Esophagus muscularis mucosa (tissue), 4 donors: ENCODE measurements at regions of chr5 and their contacts with region 1.

Region 1: GRCh38 chr5:179907570-179908324 is at the start of gene TBC1D9B:
- DNase-seq: no peak
- H3K4me3 ChIP-seq: peak within 1 kb of the TSS; percentile 69 to 88 (median 72)
- H3K27ac ChIP-seq: peak within 1 kb of the TSS; percentile 75 to 84 (median 80)
- H3K4me1 ChIP-seq: peaks cover 18 to 27% (median 22%) of the 10 kb centered on the region in 4 donors
- H3K27me3 ChIP-seq: no peaks in the 10 kb centered on the region
- CTCF ChIP-seq: peak; percentile 43 to 61 (median 58)
- EP300 ChIP-seq: no peak
- POLR2A ChIP-seq: no peak
- total RNA-seq, gene TBC1D9B: 80.2 to 229 (median 143) TPM

Region 2: DNA sequence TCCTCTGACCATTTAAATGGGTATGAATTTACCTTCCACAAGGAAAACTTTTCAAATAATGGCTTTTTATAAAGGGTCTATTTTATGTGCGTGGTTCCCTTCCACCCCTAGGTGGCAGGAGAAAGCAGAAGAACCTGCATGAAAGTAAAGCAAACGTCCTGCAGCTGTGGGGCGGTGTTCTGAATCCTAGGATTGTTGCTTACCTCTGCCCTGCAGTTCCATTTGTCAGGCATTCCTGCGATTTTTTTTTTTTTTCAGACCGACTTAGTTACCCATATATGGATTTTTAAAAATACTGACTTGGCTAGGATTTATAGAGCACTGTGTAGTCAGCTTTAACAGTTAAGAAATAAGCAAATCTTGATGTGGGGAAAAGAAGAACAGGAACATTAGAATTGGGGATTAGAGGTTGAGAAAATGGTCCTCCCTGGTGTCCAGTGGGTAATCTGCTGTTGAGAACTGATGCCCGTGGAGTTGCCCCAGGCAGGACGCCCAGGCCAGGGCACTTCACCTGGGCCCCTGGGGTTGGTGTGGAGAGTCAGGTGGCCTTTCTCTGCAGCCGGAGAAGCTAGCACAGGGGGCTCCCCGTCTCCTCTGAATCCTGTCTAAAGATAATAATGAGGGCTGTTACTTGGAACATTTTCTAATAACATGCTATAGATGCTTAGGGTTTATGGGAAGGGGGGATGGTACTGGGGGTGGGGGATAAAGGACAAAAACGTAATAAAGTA is 144.4 kb before region 1 on chr5:
- intact Hi-C with region 1: loop called (anchors 10 kb)
- DNase-seq: no peak
- H3K4me3 ChIP-seq: no peak overlapping the region
- H3K27ac ChIP-seq: peak overlapping the region; percentile 51 to 77 (median 64)
- H3K4me1 ChIP-seq: peaks cover 72 to 93% (median 83%) of the 10 kb centered on the region in 4 donors
- H3K27me3 ChIP-seq: no peaks in the 10 kb centered on the region
- CTCF ChIP-seq: peak; percentile 84 to 91 (median 89)
- EP300 ChIP-seq: no peak
- POLR2A ChIP-seq: no peak

Region 3: GRCh38 chr5:179806250-179807222 is 101.2 kb before region 1 on chr5 and contains the start of gene MGAT4B:
- intact Hi-C with region 1: loop called (anchors 2 kb)
- DNase-seq: no peak
- H3K4me3 ChIP-seq: peak within 1 kb of the TSS; percentile 76 to 99 (median 94)
- H3K27ac ChIP-seq: peak within 1 kb of the TSS; percentile 92 to 99 (median 98)
- H3K4me1 ChIP-seq: peaks cover 44 to 53% (median 52%) of the 10 kb centered on the region in 4 donors
- H3K27me3 ChIP-seq: no peaks in the 10 kb centered on the region
- CTCF ChIP-seq: no peak
- EP300 ChIP-seq: no peak
- POLR2A ChIP-seq: no peak
- total RNA-seq, gene MGAT4B: 47.1 to 70.6 (median 59.2) TPM

Region 4: DNA sequence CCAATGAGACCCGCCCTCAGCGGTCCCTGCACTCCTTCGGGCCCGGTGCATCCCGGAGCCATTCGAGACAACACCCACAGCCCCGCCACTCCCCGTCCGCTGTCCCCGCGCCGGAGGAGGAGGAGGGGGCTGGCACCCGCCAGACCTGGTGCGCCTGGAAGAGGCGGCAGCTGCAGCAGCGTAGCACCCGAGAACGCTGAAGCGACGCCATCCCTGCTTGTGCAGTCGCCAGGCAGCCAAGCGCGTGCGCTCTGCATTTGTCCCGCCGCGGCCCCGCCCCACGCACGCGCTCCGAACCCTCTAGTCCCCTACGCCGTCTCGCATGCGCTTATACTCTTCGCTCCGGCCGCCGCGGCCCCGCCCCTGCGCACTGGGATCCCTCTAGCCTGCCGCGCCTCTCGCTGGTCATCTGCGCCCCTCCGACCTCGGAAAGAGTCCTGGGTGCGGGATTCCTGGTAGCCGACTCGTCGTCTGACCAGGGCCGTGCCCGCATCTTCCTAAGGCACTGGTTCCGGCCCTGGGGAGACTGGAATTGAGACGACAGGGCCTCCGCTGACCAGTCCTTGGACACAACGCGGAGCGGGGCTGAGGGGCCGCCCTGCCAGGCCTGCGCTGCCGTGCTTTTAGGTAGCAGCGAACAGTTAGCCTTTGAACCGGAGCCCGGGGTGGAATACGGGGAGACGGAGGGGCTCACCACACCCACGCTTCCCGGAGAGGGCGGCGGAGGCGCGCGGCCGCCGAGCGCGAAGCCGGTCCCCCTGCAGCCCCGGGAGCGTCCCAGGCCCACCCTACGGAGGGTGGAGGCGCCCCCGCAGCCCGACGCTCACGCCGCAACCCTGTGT is 48.9 kb before region 1 on chr5 and contains the start of gene MRNIP:
- intact Hi-C with region 1: loop called (anchors 5 kb)
- DNase-seq: peak; percentile 98
- H3K4me3 ChIP-seq: peak within 1 kb of the TSS; percentile 91 to 97 (median 92)
- H3K27ac ChIP-seq: peak within 1 kb of the TSS; percentile 87 to 95 (median 94)
- H3K4me1 ChIP-seq: peaks cover 11 to 38% (median 31%) of the 10 kb centered on the region in 4 donors
- H3K27me3 ChIP-seq: no peaks in the 10 kb centered on the region
- CTCF ChIP-seq: peak in 2 of 3 experiments; percentile 40 to 49
- EP300 ChIP-seq: no peak
- POLR2A ChIP-seq: no peak
- total RNA-seq, gene MRNIP: 21.2 to 34.2 (median 23.3) TPM

Region 5: DNA sequence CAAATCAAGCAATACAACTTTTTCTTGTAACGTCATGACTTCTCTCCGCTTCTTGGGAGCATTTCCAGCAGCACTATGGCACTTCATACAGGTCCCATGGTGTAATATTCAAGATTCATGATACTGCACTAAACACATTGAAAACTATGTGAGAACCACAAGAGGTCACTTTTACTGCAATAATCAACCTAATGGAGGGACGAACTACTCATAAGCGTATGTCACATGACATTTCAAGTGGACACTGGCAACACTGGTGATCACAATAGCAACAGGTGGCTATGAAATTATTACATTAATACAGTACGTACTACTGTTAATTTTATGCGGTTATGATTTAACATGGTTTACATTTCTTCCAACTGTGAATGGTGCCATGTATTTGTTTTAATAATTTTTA is 78.6 kb after region 1 on chr5:
- intact Hi-C with region 1: no loop called
- DNase-seq: no peak
- H3K4me3 ChIP-seq: no peak overlapping the region
- H3K27ac ChIP-seq: no peak overlapping the region
- H3K4me1 ChIP-seq: no peaks in the 10 kb centered on the region
- H3K27me3 ChIP-seq: no peaks in the 10 kb centered on the region
- CTCF ChIP-seq: peak in 2 of 3 experiments; percentile 13 to 38
- EP300 ChIP-seq: no peak
- POLR2A ChIP-seq: no peak

Region 6: GRCh38 chr5:180071531-180072255 is 163.9 kb after region 1 on chr5 and contains the start of gene RNF130:
- intact Hi-C with region 1: loop called (anchors 10 kb)
- DNase-seq: peak; percentile 95
- H3K4me3 ChIP-seq: peak within 1 kb of the TSS; percentile 87 to 98 (median 95)
- H3K27ac ChIP-seq: peak within 1 kb of the TSS; percentile 95 to 97 (median 96)
- H3K4me1 ChIP-seq: peaks cover 15 to 40% (median 34%) of the 10 kb centered on the region in 4 donors
- H3K27me3 ChIP-seq: no peaks in the 10 kb centered on the region
- CTCF ChIP-seq: no peak
- EP300 ChIP-seq: no peak
- POLR2A ChIP-seq: peak; percentile 31
- total RNA-seq, gene RNF130: 98.4 to 136 (median 108) TPM